CD4-positive, alpha-beta memory T cell (primary cell): ENCODE measurements at regions of chr5 and their contacts with region 1.

Region 1: GRCh38 chr5:96662725-96663513 is 743 bp downstream of the CAST start:
- DNase-seq: peak; percentile 84 to 89 (median 86)
- H3K4me3 ChIP-seq: peak overlapping the region; percentile 59 to 89
- H3K4me3 Mint-ChIP-seq: peak overlapping the region; percentile 96 to 98 (median 97)
- H3K27ac ChIP-seq: peak overlapping the region; percentile 93
- H3K27ac Mint-ChIP-seq: peak overlapping the region; percentile 96 to 99 (median 98)
- H3K4me1 ChIP-seq: peaks cover 48% of the 10 kb centered on the region
- H3K4me1 Mint-ChIP-seq: peaks cover 36 to 69% (median 53%) of the 10 kb centered on the region in 4 donors
- H3K27me3 ChIP-seq: no peaks in the 10 kb centered on the region
- H3K27me3 Mint-ChIP-seq: no peaks in the 10 kb centered on the region

Region 2: DNA sequence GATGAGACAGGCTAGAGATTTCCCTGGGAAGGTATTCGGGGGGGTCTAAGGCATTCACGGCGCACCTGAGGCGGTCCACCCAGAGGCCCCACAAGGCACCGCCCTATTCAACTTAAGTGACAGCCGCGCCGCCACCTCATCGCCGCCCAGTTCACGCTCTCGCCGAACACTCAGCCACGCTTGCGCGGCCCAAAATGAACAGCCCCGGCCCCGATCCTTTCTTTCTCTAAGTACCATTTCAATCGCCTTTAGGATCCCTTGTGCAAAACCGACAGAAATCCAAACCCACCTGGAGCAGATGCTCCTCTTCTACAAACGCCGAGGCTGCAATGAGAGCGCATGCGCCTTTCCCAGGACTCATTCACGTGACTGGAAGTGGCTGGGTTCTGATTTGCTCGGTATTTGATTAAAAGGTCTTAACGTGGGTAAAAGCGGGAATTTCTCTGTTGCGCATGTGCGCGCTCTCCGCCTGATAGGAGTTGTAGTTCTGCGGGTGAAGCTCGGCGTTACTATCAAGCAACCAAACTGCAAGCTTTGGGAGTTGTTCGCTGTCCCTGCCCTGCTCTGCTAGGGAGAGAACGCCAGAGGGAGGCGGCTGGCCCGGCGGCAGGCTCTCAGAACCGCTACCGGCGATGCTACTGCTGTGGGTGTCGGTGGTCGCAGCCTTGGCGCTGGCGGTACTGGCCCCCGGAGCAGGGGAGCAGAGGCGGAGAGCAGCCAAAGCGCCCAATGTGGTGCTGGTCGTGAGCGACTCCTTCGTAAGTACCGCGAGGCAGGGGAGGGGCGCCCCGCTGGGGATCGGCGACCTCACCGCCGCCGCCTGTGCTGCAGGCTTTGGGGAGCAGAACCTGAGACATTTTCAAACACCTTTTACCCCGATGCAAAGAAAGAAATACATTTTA is 1108.0 kb before region 1 on chr5 and contains the starts of genes ARSK and SKIC3:
- CTCF ChIA-PET with region 1: no interaction called
- POLR2A ChIA-PET with region 1: interaction called, 3 read pairs
- intact Hi-C with region 1: loop called (anchors 10 kb)
- DNase-seq: peak; percentile 95 to 98 (median 97)
- H3K4me3 ChIP-seq: peak within 1 kb of the TSS; percentile 61 to 84
- H3K4me3 Mint-ChIP-seq: peak within 1 kb of the TSS; percentile 92 to 100 (median 98)
- H3K27ac ChIP-seq: peak within 1 kb of the TSS; percentile 70
- H3K27ac Mint-ChIP-seq: peak within 1 kb of the TSS; percentile 89 to 99 (median 96)
- H3K4me1 ChIP-seq: peaks cover 37% of the 10 kb centered on the region
- H3K4me1 Mint-ChIP-seq: peaks cover 32 to 53% (median 42%) of the 10 kb centered on the region in 4 donors
- H3K27me3 ChIP-seq: no peaks in the 10 kb centered on the region
- H3K27me3 Mint-ChIP-seq: no peaks in the 10 kb centered on the region
- total RNA-seq, gene ARSK: 6.8 to 7.4 TPM
- total RNA-seq, gene SKIC3: 94.6 to 99.9 TPM

Region 3: DNA sequence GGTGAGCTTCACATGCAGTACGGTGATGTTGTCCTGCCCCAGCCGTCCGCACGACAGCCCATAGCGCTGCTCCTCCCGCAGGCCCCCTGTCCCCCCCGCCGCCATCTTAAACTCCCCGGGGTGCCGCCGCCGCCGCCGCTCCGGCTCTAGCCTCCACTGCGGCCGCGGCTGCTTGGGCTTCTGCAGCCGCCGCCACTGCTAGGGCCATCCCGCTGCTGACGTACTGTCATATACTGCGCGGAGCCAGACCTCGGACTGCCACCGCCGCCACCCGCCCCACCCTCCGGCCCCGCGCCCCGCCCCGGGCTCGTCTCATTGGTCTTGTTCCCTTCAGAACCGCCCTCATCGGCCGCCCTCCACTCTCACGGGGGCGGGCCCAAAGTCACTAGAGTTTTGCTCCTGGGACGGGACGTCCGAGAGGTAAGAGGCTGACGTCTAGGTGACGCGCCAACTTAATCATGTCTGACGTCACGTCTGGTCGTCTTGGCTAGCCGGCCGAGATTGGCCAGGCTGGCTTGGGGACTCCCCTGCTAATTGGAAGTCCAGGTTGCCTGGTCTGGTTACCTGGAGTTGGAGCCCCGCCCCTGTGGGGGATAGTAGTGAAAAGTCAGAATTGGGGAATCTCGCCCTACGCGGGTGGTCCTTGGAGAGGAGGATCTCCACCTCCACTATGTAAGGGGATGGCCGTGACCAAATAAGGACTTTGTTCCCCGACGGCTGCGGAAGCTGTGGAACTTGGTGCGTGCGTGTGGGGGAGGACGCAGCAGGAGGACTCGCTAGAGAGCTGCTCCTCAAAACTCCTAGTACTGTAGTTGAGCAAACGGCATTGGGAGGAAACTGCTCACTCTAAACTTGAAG is 701.1 kb before region 1 on chr5 and contains the start of gene ELL2:
- CTCF ChIA-PET with region 1: no interaction called
- POLR2A ChIA-PET with region 1: interaction called, 4 read pairs
- intact Hi-C with region 1: loop called (anchors 5 kb)
- DNase-seq: peak; percentile 92 to 99 (median 94)
- H3K4me3 ChIP-seq: peak within 1 kb of the TSS; percentile 70 to 81
- H3K4me3 Mint-ChIP-seq: peak within 1 kb of the TSS; percentile 94 to 98 (median 96)
- H3K27ac ChIP-seq: peak within 1 kb of the TSS; percentile 83
- H3K27ac Mint-ChIP-seq: peak within 1 kb of the TSS; percentile 98 to 99 (median 99)
- H3K4me1 ChIP-seq: peaks cover 29% of the 10 kb centered on the region
- H3K4me1 Mint-ChIP-seq: peaks cover 24 to 47% (median 38%) of the 10 kb centered on the region in 4 donors
- H3K27me3 ChIP-seq: no peaks in the 10 kb centered on the region
- H3K27me3 Mint-ChIP-seq: peaks cover 0 to 3% of the 10 kb centered on the region in 2 donors
- total RNA-seq, gene ELL2: 14.0 to 15.6 TPM

Region 4: DNA sequence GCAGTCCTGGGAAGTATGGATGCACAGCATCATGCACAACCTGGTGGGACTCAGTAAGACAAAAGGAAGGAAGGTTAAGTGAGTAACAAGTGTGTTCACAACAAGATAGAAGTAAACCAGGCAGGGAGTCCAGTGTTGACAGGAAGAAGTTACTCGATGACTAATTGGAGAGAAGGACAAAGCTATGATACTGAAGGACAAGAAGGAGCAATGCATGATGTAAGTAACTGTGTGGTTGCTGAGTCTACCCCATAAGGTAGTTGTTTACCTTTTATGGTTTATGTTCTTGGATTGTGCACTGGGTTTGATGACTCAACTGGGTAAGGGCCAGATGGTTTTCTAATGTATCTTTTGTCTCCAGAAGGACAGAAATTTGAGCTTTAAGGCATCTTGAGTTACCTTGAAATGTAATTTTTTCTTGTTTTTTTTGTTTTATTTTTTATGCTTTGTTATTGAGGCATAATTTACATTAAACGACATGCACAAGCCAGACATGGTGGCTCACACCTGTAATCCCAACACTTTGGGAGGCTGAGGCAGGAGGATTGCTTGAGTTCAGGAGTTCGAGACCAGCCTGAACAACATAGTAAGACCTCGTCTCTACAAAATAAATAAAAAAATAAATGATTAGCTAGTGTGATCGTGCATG is 89.9 kb before region 1 on chr5:
- CTCF ChIA-PET with region 1: no interaction called
- POLR2A ChIA-PET with region 1: no interaction called
- intact Hi-C with region 1: no loop called
- DNase-seq: no peak
- H3K4me3 ChIP-seq: no peak overlapping the region
- H3K4me3 Mint-ChIP-seq: no peak overlapping the region
- H3K27ac ChIP-seq: no peak overlapping the region
- H3K27ac Mint-ChIP-seq: no peak overlapping the region
- H3K4me1 ChIP-seq: no peaks in the 10 kb centered on the region
- H3K4me1 Mint-ChIP-seq: peaks cover 0 to 4% (median under 1%) of the 10 kb centered on the region in 4 donors
- H3K27me3 ChIP-seq: no peaks in the 10 kb centered on the region
- H3K27me3 Mint-ChIP-seq: peaks cover 3 to 6% of the 10 kb centered on the region in 2 donors

Region 5: GRCh38 chr5:96629774-96630173 is 33.1 kb before region 1 on chr5:
- CTCF ChIA-PET with region 1: interaction called, 3 read pairs
- POLR2A ChIA-PET with region 1: interaction called, 13 read pairs
- intact Hi-C with region 1: no loop called
- DNase-seq: no peak
- H3K4me3 ChIP-seq: no peak overlapping the region
- H3K4me3 Mint-ChIP-seq: no peak overlapping the region
- H3K27ac ChIP-seq: no peak overlapping the region
- H3K27ac Mint-ChIP-seq: peak overlapping the region in 1 of 7 donors; percentile 29
- H3K4me1 ChIP-seq: no peaks in the 10 kb centered on the region
- H3K4me1 Mint-ChIP-seq: peaks cover 11 to 25% (median 15%) of the 10 kb centered on the region in 4 donors
- H3K27me3 ChIP-seq: no peaks in the 10 kb centered on the region
- H3K27me3 Mint-ChIP-seq: peaks cover 0 to 3% of the 10 kb centered on the region in 2 donors

Region 6: DNA sequence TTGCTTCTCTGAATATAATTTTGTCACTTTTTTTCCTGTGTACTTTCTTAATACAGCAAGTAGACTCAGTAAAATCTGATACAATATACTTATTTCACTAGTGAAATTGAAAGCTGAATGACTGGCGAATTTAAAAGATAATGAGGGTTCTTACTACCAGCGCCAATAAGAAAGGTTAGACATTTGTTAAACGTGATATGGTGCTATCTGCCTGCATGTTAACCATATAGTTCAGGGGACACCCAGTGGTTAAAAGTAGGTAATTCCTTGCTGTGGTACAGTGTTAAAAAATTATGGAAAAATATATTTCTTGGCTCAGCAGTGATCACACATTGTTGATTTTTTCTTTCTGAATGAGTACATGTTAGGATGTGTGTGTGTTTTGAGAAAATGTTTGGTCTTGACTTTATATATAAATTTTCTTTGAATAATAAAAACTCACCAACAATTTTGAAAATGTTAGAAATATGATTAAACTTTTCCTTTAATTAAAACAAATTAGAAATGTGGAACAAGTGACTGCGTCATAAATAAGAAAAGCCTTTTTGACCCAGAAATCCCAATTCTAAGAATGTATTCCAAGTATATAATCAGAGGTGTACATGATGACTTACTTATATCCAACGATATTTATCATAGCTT is 25.0 kb after region 1 on chr5:
- CTCF ChIA-PET with region 1: interaction called, 8 read pairs
- POLR2A ChIA-PET with region 1: interaction called, 18 read pairs
- intact Hi-C with region 1: no loop called
- DNase-seq: peak; percentile 27 to 39 (median 33)
- H3K4me3 ChIP-seq: no peak overlapping the region
- H3K4me3 Mint-ChIP-seq: peak overlapping the region in 1 of 8 donors; percentile 70
- H3K27ac ChIP-seq: no peak overlapping the region
- H3K27ac Mint-ChIP-seq: peak overlapping the region in 4 of 7 donors; percentile 4 to 46 (median 30)
- H3K4me1 ChIP-seq: peaks cover 17% of the 10 kb centered on the region
- H3K4me1 Mint-ChIP-seq: peaks cover 22 to 55% (median 32%) of the 10 kb centered on the region in 4 donors
- H3K27me3 ChIP-seq: no peaks in the 10 kb centered on the region
- H3K27me3 Mint-ChIP-seq: no peaks in the 10 kb centered on the region

Region 7: GRCh38 chr5:96714951-96715451 is 52.1 kb after region 1 on chr5:
- CTCF ChIA-PET with region 1: interaction called, 9 read pairs
- POLR2A ChIA-PET with region 1: interaction called, 14 read pairs
- intact Hi-C with region 1: no loop called
- DNase-seq: peak; percentile 59 to 83 (median 71)
- H3K4me3 ChIP-seq: no peak overlapping the region
- H3K4me3 Mint-ChIP-seq: peak overlapping the region in 6 of 8 donors; percentile 1 to 55 (median 17)
- H3K27ac ChIP-seq: peak overlapping the region; percentile 65
- H3K27ac Mint-ChIP-seq: peak overlapping the region; percentile 89 to 97 (median 94)
- H3K4me1 ChIP-seq: peaks cover 47% of the 10 kb centered on the region
- H3K4me1 Mint-ChIP-seq: peaks cover 46 to 82% (median 63%) of the 10 kb centered on the region in 4 donors
- H3K27me3 ChIP-seq: no peaks in the 10 kb centered on the region
- H3K27me3 Mint-ChIP-seq: no peaks in the 10 kb centered on the region